ENCODE measurements at regions of chr3 and their contacts with region 1.

Region 1: GRCh38 chr3:172355839-172356238 is 92.4 kb downstream of the GHSR start:
- DNase-seq: peak; percentile 78
- H3K4me3 ChIP-seq: no peak overlapping the region
- H3K27ac ChIP-seq: no peak overlapping the region
- H3K27me3 ChIP-seq: no peaks in the 10 kb centered on the region
- CTCF ChIP-seq: no peak

Region 2: DNA sequence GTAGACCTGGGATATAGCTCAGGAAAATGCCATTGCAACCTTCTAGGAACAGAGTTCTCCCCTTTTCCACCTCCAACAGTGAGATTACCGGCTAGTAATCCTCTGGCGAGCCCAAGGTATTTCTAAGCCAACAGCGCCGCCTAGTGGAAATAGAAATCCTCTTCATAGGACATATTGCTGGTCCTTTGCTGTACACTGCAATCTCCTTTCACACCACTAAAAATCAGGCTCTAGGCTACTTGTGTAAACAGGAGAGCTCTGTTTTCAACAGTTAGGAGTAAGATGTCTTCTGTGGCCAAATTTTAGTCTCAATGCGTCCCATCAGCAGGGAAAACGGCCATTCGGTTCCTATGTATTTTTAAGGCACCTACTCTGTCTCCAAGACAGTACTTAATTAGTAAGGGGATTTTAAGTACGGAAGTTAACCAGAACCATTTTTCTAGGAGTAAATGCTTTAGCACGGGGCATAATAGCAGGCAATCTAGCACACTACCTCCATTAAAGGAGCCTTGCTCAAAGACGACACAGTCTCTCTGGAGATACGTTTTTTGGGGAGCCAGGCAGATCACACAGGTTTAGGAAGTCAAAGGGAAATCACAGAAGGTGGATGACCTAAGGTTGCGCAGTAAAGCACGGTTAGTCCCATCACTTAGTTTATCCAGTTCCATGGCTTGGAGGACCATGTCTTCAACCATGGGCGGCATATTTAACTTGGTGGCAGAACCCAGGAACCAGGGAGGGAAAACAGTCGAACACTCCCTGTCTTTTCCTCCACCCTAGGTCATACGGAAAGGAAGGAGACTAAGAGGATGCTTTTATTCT is 311.2 kb after region 1 on chr3:
- in situ Hi-C with region 1: loop called (anchors 25 kb)
- DNase-seq: peak; percentile 84
- H3K4me3 ChIP-seq: no peak overlapping the region
- H3K27ac ChIP-seq: no peak overlapping the region
- H3K27me3 ChIP-seq: no peaks in the 10 kb centered on the region
- CTCF ChIP-seq: peak; percentile 84

Measured in brain microvascular endothelial cell (primary cell).